ENCODE measurements at regions of chr6 and their contacts with region 1.

Region 1: DNA sequence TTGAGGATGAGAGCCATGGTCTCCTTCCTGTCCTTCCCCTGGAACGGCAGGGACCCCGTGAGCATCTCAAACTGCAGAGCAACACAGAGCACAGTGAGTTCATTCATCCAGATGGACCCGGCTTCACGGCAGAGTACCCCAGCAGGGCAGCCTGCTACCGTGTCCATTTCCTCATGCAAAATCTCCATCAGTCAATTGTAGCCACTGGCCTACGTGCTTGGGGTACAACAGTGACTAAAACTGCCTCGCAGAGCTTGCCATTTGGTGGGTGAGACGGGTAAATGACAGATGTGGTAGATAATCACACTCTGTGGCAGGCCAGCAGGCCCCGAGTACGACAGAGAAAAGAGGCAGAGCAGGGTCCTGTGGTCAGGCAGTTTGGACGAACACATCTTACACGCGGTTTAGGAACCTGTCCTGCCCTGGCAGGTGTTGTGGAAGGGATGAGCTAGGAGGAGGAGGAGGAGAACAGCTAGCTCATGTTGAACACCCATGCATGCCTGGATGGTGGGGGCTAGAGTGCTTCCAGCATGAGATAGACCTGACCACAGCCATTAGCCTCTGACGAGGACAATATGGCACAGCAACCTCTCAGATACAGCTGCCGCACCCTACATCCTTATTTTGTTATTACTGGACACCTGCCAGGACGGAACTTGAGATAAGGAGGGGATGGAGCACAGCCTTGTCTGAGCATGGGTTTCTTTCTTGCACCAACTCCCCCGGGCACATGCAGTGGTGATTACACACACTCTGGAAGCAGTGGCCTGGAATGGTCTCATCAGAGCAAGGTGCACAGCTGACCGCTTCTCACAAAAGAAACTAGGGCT is 95.6 kb downstream of the RAMACL start:
- DNase-seq: peak; percentile 84
- H3K4me3 ChIP-seq: no peak overlapping the region
- H3K27ac ChIP-seq: peak overlapping the region in 1 of 2 experiments; percentile 99; a peak in 2 of 4 replicates
- H3K4me1 ChIP-seq: peaks cover 0 to 59% of the 10 kb centered on the region in 2 experiments; a peak in 3 of 4 replicates
- H3K27me3 ChIP-seq: no peaks in the 10 kb centered on the region
- CTCF ChIP-seq: no peak
- EP300 ChIP-seq: peak in 1 of 2 experiments; percentile 96; a peak in 2 of 4 replicates
- RAD21 ChIP-seq: peak; percentile 15

Region 2: DNA sequence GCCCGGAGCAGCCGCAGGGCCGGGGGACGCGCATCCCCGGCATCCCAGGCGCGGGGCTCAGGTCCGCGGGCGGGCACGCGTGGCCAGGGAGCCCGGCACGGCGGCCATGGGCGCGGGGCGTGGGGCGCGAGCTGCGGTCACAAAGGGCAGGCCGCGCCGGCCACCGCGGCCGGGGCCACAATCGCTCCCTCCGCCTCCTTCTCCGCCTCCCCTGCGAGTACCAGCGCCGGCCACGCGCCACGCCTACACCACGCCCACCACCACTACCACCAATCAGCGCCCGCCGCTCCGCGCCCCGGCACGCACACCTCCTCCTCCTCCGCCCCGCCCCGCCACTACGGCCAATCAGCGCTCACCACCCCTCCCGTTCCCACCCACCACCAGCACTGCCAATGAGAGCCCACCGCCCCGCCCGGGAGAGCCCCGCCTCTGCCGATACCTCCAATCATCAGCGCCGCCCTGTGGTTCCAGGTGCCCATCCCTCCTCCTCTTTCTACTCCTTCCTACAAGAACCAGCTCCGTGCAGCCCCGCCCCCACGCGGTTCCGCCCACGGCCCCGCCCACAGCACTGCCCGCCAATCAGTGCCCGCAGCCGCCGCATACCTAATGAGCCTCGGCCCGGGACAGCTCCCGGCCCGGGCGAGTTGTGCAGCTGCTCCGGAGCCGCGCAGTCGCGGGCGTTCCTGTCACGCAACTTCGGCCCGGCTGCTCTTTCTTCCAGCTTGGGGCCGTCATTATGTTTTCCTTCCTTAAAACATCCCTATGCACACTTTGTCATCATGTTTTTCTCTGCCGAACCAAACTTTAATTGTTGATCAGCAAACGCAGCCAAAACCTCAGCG is 136.4 kb after region 1 on chr6 and contains the start of gene RPS6KA2:
- CTCF ChIA-PET with region 1: interaction called, 3 read pairs
- POLR2A ChIA-PET with region 1: interaction called, 14 read pairs
- DNase-seq: peak; percentile 97
- H3K4me3 ChIP-seq: peak within 1 kb of the TSS; percentile 83 to 97
- H3K27ac ChIP-seq: peak within 1 kb of the TSS; percentile 89 to 97
- H3K4me1 ChIP-seq: peaks cover 10 to 31% of the 10 kb centered on the region in 2 experiments
- H3K27me3 ChIP-seq: no peaks in the 10 kb centered on the region
- CTCF ChIP-seq: no peak
- EP300 ChIP-seq: no peak
- RAD21 ChIP-seq: peak; percentile 20
- polyA plus RNA-seq, gene RPS6KA2: 59.5 and 60.3 TPM in 2 replicates